ENCODE measurements at regions of chr3 and their contacts with region 1.

Region 1: DNA sequence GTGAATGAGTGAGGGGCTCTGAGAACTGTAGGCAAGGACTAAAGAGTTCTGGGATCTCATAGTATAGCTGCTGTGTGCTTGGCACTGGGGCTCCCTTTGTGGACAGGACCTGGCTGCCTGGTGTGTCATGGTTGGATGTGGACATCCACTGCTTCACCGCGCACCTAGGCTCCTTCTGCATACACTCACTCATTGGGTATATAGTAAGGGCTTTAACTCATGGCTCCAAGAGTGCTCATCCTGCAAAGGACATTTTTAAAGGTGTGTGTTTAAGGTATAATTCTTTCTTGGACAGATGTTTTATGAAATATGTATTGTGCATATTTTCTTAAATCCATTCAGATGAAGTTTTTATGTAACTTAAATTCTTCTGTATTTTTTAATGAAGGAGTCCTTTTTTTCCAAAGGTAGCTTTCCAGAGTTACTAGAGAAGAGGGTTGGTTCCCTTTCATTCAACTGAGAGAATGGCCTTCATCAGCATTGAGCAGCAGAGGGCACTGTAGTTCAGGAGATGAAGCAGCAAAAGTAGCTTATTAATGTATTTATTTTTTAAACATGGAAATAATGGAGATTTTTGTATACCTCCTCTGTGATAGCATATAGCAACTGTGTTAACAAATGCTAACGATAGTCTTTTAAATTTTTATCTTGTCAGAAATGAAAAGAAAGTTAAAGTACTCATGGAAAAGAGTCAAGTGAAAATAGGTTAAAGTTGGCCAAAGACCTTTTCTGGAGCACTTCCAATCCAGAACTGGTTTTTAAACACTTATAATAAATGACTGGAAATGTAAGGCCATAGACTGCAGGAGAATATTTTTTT is 25.2 kb downstream of the OXNAD1 start:
- DNase-seq: peak; percentile 51
- ATAC-seq: peak; percentile 69
- H3K4me3 Mint-ChIP-seq: no peak overlapping the region
- H3K27ac Mint-ChIP-seq: no peak overlapping the region
- H3K4me1 Mint-ChIP-seq: no peaks in the 10 kb centered on the region
- H3K27me3 Mint-ChIP-seq: no peaks in the 10 kb centered on the region
- CTCF ChIP-seq: peak; percentile 29; the same call in 1 of the 2 replicates

Region 2: GRCh38 chr3:16319307-16319706 is 29.1 kb after region 1 on chr3:
- CTCF ChIA-PET with region 1: interaction called, 40 read pairs
- POLR2A ChIA-PET with region 1: no interaction called
- DNase-seq: peak; percentile 67
- ATAC-seq: peak; percentile 92
- H3K4me3 Mint-ChIP-seq: no peak overlapping the region
- H3K27ac Mint-ChIP-seq: peak overlapping the region; percentile 81
- H3K4me1 Mint-ChIP-seq: peaks cover 11% of the 10 kb centered on the region; the same call in 1 of the 2 replicates
- H3K27me3 Mint-ChIP-seq: no peaks in the 10 kb centered on the region
- CTCF ChIP-seq: peak; percentile 77

Region 3: GRCh38 chr3:16511681-16512434 is 221.6 kb after region 1 on chr3:
- CTCF ChIA-PET with region 1: interaction called, 16 read pairs
- POLR2A ChIA-PET with region 1: interaction called, 4 read pairs
- DNase-seq: no peak
- ATAC-seq: peak; percentile 27
- H3K4me3 Mint-ChIP-seq: peak overlapping the region; percentile 87
- H3K27ac Mint-ChIP-seq: no peak overlapping the region
- H3K4me1 Mint-ChIP-seq: peaks cover 36% of the 10 kb centered on the region
- H3K27me3 Mint-ChIP-seq: peaks cover 61% of the 10 kb centered on the region
- CTCF ChIP-seq: no peak

Region 4: DNA sequence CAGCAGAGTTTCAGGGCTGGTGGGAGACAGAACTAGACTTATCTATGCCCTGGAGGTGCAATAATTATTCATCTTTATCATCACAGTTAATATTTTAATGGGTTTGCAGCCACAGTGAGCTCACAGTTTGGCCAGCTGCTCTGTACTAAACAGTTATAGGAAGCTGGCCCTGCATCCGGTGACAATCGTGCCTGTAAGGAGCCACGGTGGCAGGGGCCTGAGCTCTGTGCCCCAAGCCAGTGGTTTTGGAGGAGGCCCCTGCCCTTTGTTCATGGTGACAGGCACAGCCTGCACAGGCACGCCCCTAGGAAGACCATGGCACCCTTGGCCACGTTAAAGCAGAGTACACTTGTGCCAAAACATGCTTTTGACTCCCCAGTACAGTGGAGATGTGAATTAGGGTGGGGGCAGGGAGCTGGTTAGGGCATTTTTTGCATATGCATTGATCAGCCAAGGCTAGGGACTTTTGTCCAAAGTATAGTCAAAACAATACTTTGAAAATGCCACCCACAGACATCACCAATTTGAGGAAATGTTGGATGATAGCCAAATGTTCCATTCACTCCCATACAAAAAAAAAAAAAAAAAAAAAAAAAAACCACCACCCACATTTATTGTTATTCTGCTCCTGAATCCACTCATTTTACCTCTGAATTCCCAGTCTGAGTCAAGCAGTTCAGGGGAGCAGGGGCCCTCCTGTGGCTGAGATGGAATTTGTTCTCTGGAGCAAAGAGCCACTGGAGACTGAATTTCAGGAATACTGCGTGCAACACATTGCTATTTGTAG is 226.7 kb after region 1 on chr3:
- CTCF ChIA-PET with region 1: interaction called, 16 read pairs
- POLR2A ChIA-PET with region 1: interaction called, 4 read pairs
- DNase-seq: no peak
- ATAC-seq: peak; percentile 38
- H3K4me3 Mint-ChIP-seq: no peak overlapping the region
- H3K27ac Mint-ChIP-seq: no peak overlapping the region
- H3K4me1 Mint-ChIP-seq: peaks cover 28% of the 10 kb centered on the region
- H3K27me3 Mint-ChIP-seq: peaks cover 38% of the 10 kb centered on the region
- CTCF ChIP-seq: no peak

Region 5: DNA sequence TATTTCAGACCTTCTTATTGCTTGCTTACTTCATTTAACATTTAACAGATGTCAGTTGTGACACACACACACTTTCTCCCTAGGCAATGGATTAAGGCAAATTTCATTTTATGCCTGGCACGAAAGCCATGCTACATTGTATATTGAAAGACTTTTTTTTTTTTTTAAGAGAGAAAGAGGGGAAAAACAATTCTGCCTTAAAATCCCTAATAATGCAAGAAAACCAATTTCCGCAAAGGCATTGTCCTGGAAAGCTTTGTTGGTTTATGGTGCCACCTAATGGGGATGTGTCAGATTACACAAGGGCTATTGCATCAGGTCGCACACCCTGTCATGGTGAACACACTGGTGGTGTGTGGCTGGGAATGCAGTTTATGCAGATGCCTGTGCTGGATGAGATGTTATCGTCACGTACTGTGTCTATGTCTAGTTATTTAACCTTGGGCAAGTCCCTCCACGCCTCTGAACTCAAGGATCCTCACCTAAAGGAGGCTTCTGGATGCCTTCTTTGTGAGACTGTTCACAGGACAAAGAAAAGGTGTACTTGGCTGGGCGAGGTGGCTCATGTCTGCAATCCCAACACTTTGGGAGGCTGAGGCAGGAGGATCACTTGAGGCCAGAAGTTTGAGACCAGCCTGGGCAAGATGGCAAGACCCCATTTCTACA is 260.6 kb after region 1 on chr3:
- CTCF ChIA-PET with region 1: interaction called, 28 read pairs
- POLR2A ChIA-PET with region 1: interaction called, 3 read pairs
- DNase-seq: peak; percentile 73
- ATAC-seq: peak; percentile 94
- H3K4me3 Mint-ChIP-seq: peak overlapping the region; percentile 49
- H3K27ac Mint-ChIP-seq: peak overlapping the region; percentile 91
- H3K4me1 Mint-ChIP-seq: peaks cover 13% of the 10 kb centered on the region
- H3K27me3 Mint-ChIP-seq: peaks cover 3% of the 10 kb centered on the region; the same call in 1 of the 2 replicates
- CTCF ChIP-seq: peak; percentile 75

Measured in WTC11 (cell line).